ENCODE measurements at regions of chr21 and their contacts with region 1.

Region 1: GRCh38 chr21:42220138-42220701 is 1.3 kb downstream of the ABCG1 start:
- DNase-seq: peak; percentile 84
- ATAC-seq: peak; percentile 84
- H3K4me3 Mint-ChIP-seq: peak overlapping the region; percentile 85
- H3K27ac Mint-ChIP-seq: peak overlapping the region; percentile 91
- H3K4me1 Mint-ChIP-seq: peaks cover 20% of the 10 kb centered on the region
- H3K27me3 Mint-ChIP-seq: no peaks in the 10 kb centered on the region
- CTCF ChIP-seq: no peak

Region 2: GRCh38 chr21:42187976-42188653 is 32.1 kb before region 1 on chr21:
- CTCF ChIA-PET with region 1: interaction called, 7 read pairs
- POLR2A ChIA-PET with region 1: interaction called, 21 read pairs
- intact Hi-C with region 1: no loop called
- DNase-seq: peak; percentile 94
- ATAC-seq: peak; percentile 90
- H3K4me3 Mint-ChIP-seq: peak overlapping the region; percentile 62
- H3K27ac Mint-ChIP-seq: peak overlapping the region; percentile 95
- H3K4me1 Mint-ChIP-seq: peaks cover 67% of the 10 kb centered on the region
- H3K27me3 Mint-ChIP-seq: no peaks in the 10 kb centered on the region
- CTCF ChIP-seq: no peak

Region 3: DNA sequence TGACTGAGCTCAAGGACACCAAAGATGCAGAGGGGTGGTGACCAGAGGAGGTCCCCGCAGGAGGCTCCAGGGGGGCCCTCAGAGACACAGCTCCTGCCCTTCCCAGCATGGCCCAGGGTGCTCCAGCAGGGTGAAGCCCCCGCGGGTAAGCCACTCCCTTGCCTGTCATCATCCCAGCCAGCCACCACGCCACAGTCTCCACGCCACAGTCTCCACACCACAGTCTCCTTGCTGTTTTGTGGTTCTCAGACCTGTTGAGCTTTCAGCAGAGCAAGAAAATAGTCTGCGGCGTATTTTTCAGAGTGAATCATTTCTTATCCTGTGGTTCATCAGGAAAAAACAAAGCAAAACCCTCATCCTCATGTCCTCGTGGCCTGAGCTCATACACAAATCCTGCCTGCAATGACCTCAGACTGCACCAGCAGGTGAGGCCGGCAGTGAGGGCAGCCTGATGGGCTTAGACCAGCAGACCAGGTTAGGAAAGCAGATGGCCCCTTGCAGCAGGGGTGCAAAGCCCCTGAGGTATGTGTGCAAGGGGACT is 27.0 kb before region 1 on chr21:
- CTCF ChIA-PET with region 1: interaction called, 7 read pairs
- POLR2A ChIA-PET with region 1: interaction called, 21 read pairs
- intact Hi-C with region 1: no loop called
- DNase-seq: peak; percentile 88
- ATAC-seq: peak; percentile 50
- H3K4me3 Mint-ChIP-seq: no peak overlapping the region
- H3K27ac Mint-ChIP-seq: peak overlapping the region; percentile 75
- H3K4me1 Mint-ChIP-seq: peaks cover 57% of the 10 kb centered on the region
- H3K27me3 Mint-ChIP-seq: no peaks in the 10 kb centered on the region
- CTCF ChIP-seq: no peak